A673 (cell line): ENCODE measurements at regions of chr19 and their contacts with region 1.

Region 1: GRCh38 chr19:14089662-14090508 is 666 bp downstream of the SAMD1 start:
- DNase-seq: peak; percentile 74
- H3K4me3 ChIP-seq: peak overlapping the region; percentile 64
- H3K27ac ChIP-seq: peak overlapping the region; percentile 61
- H3K4me1 ChIP-seq: no peaks in the 10 kb centered on the region
- H3K27me3 ChIP-seq: no peaks in the 10 kb centered on the region
- CTCF ChIP-seq: peak; percentile 16; the same call in 1 of the 2 replicates

Region 2: GRCh38 chr19:13267889-13268288 is 822.0 kb before region 1 on chr19:
- CTCF ChIA-PET with region 1: interaction called, 12 read pairs
- POLR2A ChIA-PET with region 1: no interaction called
- intact Hi-C with region 1: no loop called
- DNase-seq: no peak
- H3K4me3 ChIP-seq: no peak overlapping the region
- H3K27ac ChIP-seq: no peak overlapping the region
- H3K4me1 ChIP-seq: no peaks in the 10 kb centered on the region
- H3K27me3 ChIP-seq: no peaks in the 10 kb centered on the region
- CTCF ChIP-seq: no peak

Region 3: GRCh38 chr19:14160017-14160703 is 70.3 kb after region 1 on chr19:
- CTCF ChIA-PET with region 1: no interaction called
- POLR2A ChIA-PET with region 1: no interaction called
- intact Hi-C with region 1: no loop called
- DNase-seq: no peak
- H3K4me3 ChIP-seq: no peak overlapping the region
- H3K27ac ChIP-seq: no peak overlapping the region
- H3K4me1 ChIP-seq: peaks cover 21% of the 10 kb centered on the region
- H3K27me3 ChIP-seq: no peaks in the 10 kb centered on the region
- CTCF ChIP-seq: no peak

Region 4: DNA sequence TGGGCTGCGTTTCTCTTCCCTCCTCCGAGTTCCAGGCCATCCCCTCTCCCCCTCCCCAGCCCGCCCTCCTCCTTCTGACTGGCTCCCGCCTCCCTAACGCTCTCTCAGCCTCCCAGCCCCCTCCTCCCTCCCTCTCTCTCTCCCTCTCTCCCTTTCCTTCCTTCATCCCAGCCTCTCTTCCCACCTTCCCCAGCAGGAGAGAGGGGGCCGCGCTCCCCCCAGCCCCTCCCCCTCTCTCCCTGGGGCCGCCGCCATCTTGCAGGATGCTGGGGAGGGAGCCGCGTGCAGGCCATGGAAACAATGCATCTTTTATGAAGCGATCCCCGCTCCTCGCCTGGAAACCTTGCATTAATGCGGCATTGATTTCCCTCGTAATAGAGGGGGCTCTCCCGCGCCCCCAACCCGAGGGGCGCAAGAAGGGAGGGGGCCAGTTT is 158.7 kb after region 1 on chr19:
- CTCF ChIA-PET with region 1: no interaction called
- POLR2A ChIA-PET with region 1: no interaction called
- intact Hi-C with region 1: no loop called
- DNase-seq: peak; percentile 92
- H3K4me3 ChIP-seq: peak overlapping the region; percentile 48
- H3K27ac ChIP-seq: peak overlapping the region; percentile 74
- H3K4me1 ChIP-seq: peaks cover 18% of the 10 kb centered on the region
- H3K27me3 ChIP-seq: no peaks in the 10 kb centered on the region
- CTCF ChIP-seq: no peak

Region 5: DNA sequence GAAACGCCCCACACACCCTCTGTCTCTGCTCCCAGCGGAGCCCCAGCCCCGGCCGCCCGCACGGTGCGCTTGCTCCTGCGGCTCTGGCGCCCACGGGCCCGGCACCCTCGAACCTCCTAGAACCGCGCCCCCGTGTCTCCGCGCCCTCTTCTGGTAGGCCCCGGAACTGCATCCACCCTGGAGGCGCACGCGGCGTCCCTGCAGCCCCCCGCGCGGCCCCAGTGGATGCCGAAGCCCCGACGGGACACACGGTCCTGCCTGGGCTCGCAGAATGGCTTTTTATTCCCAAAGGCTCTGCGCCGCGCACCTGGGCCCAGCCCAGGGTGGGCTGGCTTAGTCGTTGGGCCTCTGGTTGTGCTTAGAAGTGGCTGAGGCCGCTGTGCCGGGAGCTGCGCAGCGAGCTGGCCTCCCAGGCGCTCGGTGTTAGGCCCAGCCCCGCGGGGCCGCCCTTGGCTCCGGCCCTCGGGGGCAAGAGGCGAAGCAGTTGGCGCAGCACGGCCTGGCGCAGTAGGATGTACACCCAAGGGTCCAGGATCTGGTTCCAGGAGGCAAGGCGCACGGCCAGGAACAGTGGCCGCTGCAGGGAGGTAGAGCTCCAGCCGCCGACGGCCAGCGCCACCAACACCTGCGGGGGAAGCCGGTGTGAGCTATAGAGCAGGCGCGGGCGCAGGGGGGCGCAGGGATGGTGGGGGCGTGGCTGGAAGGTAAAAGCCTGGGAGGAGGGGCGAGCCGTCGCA is 382.5 kb after region 1 on chr19:
- CTCF ChIA-PET with region 1: no interaction called
- POLR2A ChIA-PET with region 1: no interaction called
- intact Hi-C with region 1: no loop called
- DNase-seq: peak; percentile 80
- H3K4me3 ChIP-seq: no peak overlapping the region
- H3K27ac ChIP-seq: no peak overlapping the region
- H3K4me1 ChIP-seq: peaks cover 28% of the 10 kb centered on the region
- H3K27me3 ChIP-seq: no peaks in the 10 kb centered on the region
- CTCF ChIP-seq: peak; percentile 99